Mammary epithelial cell (primary cell): ENCODE measurements at regions of chr4 and their contacts with region 1.

Region 1: DNA sequence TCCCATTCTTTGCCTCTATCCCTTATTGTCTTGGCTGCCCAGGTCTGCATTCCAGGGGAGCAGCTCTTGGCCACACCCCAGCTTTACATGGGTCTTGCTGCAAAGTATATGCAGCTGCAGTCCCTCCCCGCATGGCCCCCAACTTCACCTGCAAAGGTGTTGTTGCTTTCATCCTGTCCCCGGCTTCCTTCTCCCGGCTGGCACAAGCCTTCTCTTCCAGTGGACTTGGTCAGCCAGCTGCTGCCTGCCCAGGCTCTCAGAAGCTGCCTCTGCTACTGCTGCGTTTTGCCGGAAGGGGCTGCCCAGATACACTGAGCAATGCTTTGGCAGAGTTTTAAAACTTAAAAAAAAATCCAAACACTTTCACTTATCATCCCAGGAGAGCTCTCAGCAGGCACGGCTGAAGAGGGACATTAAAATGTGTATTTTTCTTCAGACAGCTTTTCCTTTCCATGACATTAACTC is 121.2 kb upstream of the PDLIM3 start:
- DNase-seq: peak; percentile 46
- H3K4me3 ChIP-seq: peak overlapping the region in 2 of 3 experiments; percentile 13 to 14
- H3K27ac ChIP-seq: no peak overlapping the region
- H3K4me1 ChIP-seq: no peaks in the 10 kb centered on the region
- H3K27me3 ChIP-seq: no peaks in the 10 kb centered on the region
- CTCF ChIP-seq: peak; percentile 30 to 61

Region 2: DNA sequence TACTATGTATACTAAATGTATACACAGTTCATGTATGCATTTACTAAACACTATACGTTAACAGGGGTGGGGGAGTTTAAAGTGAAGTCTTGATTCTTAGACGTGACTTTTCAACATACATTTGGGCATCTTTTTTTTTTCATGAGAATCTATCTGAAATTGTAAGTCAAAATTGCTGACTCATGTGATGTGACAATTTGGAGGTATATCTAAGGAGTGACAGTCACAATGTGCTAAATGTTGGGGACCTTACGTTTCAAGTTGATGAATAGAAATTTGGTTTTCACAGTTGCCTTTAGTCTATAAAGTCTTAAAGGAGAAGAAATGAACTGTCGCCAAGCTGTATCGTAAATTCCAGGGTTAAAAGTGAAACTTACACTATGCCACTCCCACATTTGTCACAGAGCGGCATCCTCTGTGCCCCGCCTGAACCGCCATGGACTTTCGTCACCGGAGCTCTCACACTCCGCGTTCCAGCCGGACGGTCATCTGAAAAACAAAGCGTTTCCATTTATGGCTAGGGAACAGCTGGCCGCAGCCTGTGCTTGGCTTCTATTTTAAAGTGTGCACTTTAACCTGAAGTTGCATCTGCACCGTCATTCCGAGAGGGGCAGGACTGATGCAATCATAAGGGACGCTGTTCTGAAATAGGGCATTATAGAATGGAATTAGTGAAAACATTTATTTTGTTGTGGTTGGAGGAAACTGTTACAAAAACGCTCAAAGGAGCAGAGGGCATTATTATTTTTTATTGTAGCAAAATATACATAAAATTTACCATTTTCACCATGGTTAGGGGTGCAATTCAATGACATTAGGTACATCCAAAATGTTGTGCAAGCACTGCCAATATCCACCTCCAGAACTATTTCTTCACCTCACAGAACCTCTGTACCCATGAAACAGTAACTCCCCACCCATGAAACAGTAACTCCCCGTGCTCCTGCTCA is 152.1 kb before region 1 on chr4:
- CTCF ChIA-PET with region 1: no interaction called
- dilution Hi-C with region 1: no loop called
- in situ Hi-C with region 1: no loop called
- intact Hi-C with region 1: no loop called
- DNase-seq: no peak
- H3K4me3 ChIP-seq: no peak overlapping the region
- H3K27ac ChIP-seq: no peak overlapping the region
- H3K4me1 ChIP-seq: peaks cover 9% of the 10 kb centered on the region
- H3K27me3 ChIP-seq: no peaks in the 10 kb centered on the region
- CTCF ChIP-seq: no peak

Region 3: GRCh38 chr4:186021461-186022167 is 365.1 kb after region 1 on chr4:
- CTCF ChIA-PET with region 1: interaction called, 11 read pairs
- dilution Hi-C with region 1: no loop called
- in situ Hi-C with region 1: no loop called
- intact Hi-C with region 1: loop called (anchors 1 kb)
- DNase-seq: peak; percentile 11
- H3K4me3 ChIP-seq: no peak overlapping the region
- H3K27ac ChIP-seq: no peak overlapping the region
- H3K4me1 ChIP-seq: no peaks in the 10 kb centered on the region
- H3K27me3 ChIP-seq: no peaks in the 10 kb centered on the region
- CTCF ChIP-seq: peak; percentile 80 to 96